Heart left ventricle (tissue), 16 donors: ENCODE measurements at regions of chr20 and their contacts with region 1.

Region 1: GRCh38 chr20:11204926-11205768 is 531.3 kb upstream of the JAG1 start:
- DNase-seq: peak in 4 of 5 donors; percentile 56 to 72 (median 68)
- ATAC-seq: peak; percentile 82 to 95 (median 93)
- H3K4me3 ChIP-seq: no peak overlapping the region
- H3K27ac ChIP-seq: peak overlapping the region in 5 of 12 donors; percentile 15 to 46 (median 39)
- H3K4me1 ChIP-seq: peaks cover 0 to 17% (median 7%) of the 10 kb centered on the region in 12 donors
- H3K27me3 ChIP-seq: no peaks in the 10 kb centered on the region
- CTCF ChIP-seq: peak; percentile 65 to 91 (median 83)
- POLR2A ChIP-seq: no peak

Region 2: GRCh38 chr20:10547276-10548114 is 657.7 kb before region 1 on chr20:
- intact Hi-C with region 1: loop called in 8 of 10 experiments (anchors 5 to 10 kb)
- DNase-seq: no peak
- ATAC-seq: no peak
- H3K4me3 ChIP-seq: no peak overlapping the region
- H3K27ac ChIP-seq: no peak overlapping the region
- H3K4me1 ChIP-seq: peaks cover 0 to 24% (median 0%) of the 10 kb centered on the region in 12 donors
- H3K27me3 ChIP-seq: no peaks in the 10 kb centered on the region
- CTCF ChIP-seq: no peak
- POLR2A ChIP-seq: no peak

Region 3: GRCh38 chr20:10563935-10564492 is 641.1 kb before region 1 on chr20:
- intact Hi-C with region 1: loop called in 4 of 10 experiments (anchors 5 to 10 kb)
- DNase-seq: no peak
- ATAC-seq: no peak
- H3K4me3 ChIP-seq: no peak overlapping the region
- H3K27ac ChIP-seq: no peak overlapping the region
- H3K4me1 ChIP-seq: peaks cover 0 to 18% (median 2%) of the 10 kb centered on the region in 12 donors
- H3K27me3 ChIP-seq: no peaks in the 10 kb centered on the region
- CTCF ChIP-seq: no peak
- POLR2A ChIP-seq: no peak

Region 4: GRCh38 chr20:11067359-11067758 is 137.8 kb before region 1 on chr20:
- intact Hi-C with region 1: loop called in 1 of 10 experiments (anchors 10 kb)
- DNase-seq: no peak
- ATAC-seq: peak in 3 of 4 donors; percentile 71 to 86 (median 77)
- H3K4me3 ChIP-seq: no peak overlapping the region
- H3K27ac ChIP-seq: peak overlapping the region in 6 of 12 donors; percentile 17 to 69 (median 35)
- H3K4me1 ChIP-seq: peaks cover 0 to 37% (median 11%) of the 10 kb centered on the region in 12 donors
- H3K27me3 ChIP-seq: no peaks in the 10 kb centered on the region
- CTCF ChIP-seq: no peak
- POLR2A ChIP-seq: no peak

Region 5: GRCh38 chr20:11267131-11267761 is 62.1 kb after region 1 on chr20:
- intact Hi-C with region 1: loop called in 5 of 10 experiments (anchors 5 to 10 kb)
- DNase-seq: peak in 4 of 5 donors; percentile 52 to 68 (median 64)
- ATAC-seq: peak; percentile 83 to 98 (median 94)
- H3K4me3 ChIP-seq: no peak overlapping the region
- H3K27ac ChIP-seq: peak overlapping the region in 11 of 12 donors; percentile 7 to 68 (median 37)
- H3K4me1 ChIP-seq: peaks cover 0 to 23% (median 17%) of the 10 kb centered on the region in 12 donors
- H3K27me3 ChIP-seq: no peaks in the 10 kb centered on the region
- CTCF ChIP-seq: peak in 1 of 12 donors; percentile 18
- POLR2A ChIP-seq: no peak